Activated CD4-positive, alpha-beta T cell treated with anti-CD3 and anti-CD28 coated beads, Interleukin-2, amount 10 ng/mL, durations not matched to agents 24 days and 14 days (primary cell): ENCODE measurements at regions of chr2 and their contacts with region 1.

Region 1: GRCh38 chr2:71353248-71353647 is 21.7 kb downstream of the ZNF638 start:
- DNase-seq: no peak
- H3K4me3 Mint-ChIP-seq: no peak overlapping the region
- H3K27ac Mint-ChIP-seq: no peak overlapping the region
- H3K4me1 Mint-ChIP-seq: peaks cover 25% of the 10 kb centered on the region
- H3K27me3 Mint-ChIP-seq: no peaks in the 10 kb centered on the region

Region 2: DNA sequence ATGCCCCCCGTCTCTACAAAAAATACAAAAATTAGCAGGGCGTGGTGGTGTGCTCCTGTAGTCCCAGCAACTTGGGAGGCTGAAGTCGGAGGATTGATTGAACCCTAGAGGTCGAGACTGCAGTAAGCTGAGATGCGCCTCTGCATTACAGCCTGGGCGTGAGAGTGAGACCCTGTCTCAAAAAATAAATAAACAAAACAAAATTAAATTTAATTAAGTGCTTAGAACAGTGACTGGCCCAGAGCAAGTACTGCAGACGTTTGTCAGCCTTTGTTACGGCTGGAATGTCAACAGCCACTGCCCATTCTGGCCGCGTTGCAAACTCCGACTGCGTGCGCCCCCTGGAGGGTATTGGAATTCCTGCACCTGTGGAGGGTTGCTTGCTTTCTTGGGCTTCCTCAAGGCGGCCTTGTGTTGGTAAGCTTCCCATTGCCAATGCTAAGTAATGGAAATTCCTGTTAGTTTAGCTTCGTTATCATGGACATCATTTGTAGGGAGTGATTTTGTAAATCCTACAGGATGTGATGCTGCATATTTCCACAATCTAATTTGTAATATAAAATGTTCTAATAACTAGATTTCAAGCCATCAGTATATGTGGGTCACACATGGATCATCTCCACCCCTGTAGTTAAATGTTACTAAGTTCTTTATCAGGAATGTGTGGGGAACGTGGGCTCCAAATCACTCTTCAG is 433.4 kb before region 1 on chr2:
- intact Hi-C with region 1: no loop called
- DNase-seq: peak; percentile 93
- H3K4me3 Mint-ChIP-seq: no peak overlapping the region
- H3K27ac Mint-ChIP-seq: no peak overlapping the region
- H3K4me1 Mint-ChIP-seq: peaks cover 2% of the 10 kb centered on the region
- H3K27me3 Mint-ChIP-seq: peaks cover 28% of the 10 kb centered on the region

Region 3: GRCh38 chr2:71331581-71332434 is 21.4 kb before region 1 on chr2 and contains the start of gene ZNF638:
- intact Hi-C with region 1: loop called (anchors 2 kb)
- DNase-seq: peak; percentile 98
- H3K4me3 Mint-ChIP-seq: peak within 1 kb of the TSS; percentile 94
- H3K27ac Mint-ChIP-seq: peak within 1 kb of the TSS; percentile 100
- H3K4me1 Mint-ChIP-seq: peaks cover 20% of the 10 kb centered on the region
- H3K27me3 Mint-ChIP-seq: peaks cover 12% of the 10 kb centered on the region
- total RNA-seq, gene ZNF638: 90.2 and 91.5 TPM in 2 replicates